ENCODE measurements at regions of chr3 and their contacts with region 1.

Region 1: GRCh38 chr3:174540116-174540908 is 318.8 kb upstream of the NAALADL2 start:
- DNase-seq: no peak
- H3K4me3 ChIP-seq: no peak overlapping the region
- H3K27ac ChIP-seq: no peak overlapping the region
- H3K4me1 ChIP-seq: no peaks in the 10 kb centered on the region
- H3K27me3 ChIP-seq: no peaks in the 10 kb centered on the region
- CTCF ChIP-seq: no peak

Region 2: GRCh38 chr3:174408310-174408709 is 132.0 kb before region 1 on chr3:
- CTCF ChIA-PET with region 1: no interaction called
- POLR2A ChIA-PET with region 1: no interaction called
- intact Hi-C with region 1: no loop called
- DNase-seq: no peak
- H3K4me3 ChIP-seq: no peak overlapping the region
- H3K27ac ChIP-seq: no peak overlapping the region
- H3K4me1 ChIP-seq: no peaks in the 10 kb centered on the region
- H3K27me3 ChIP-seq: no peaks in the 10 kb centered on the region
- CTCF ChIP-seq: no peak

Region 3: GRCh38 chr3:174821477-174821876 is 281.2 kb after region 1 on chr3:
- CTCF ChIA-PET with region 1: no interaction called
- POLR2A ChIA-PET with region 1: no interaction called
- intact Hi-C with region 1: loop called (anchors 10 kb)
- DNase-seq: no peak
- H3K4me3 ChIP-seq: no peak overlapping the region
- H3K27ac ChIP-seq: no peak overlapping the region
- H3K4me1 ChIP-seq: no peaks in the 10 kb centered on the region; the same call in 1 of the 2 replicates
- H3K27me3 ChIP-seq: no peaks in the 10 kb centered on the region
- CTCF ChIP-seq: no peak

Measured in PC-9 (cell line).